ENCODE measurements at regions of chr10 and their contacts with region 1.

Region 1: DNA sequence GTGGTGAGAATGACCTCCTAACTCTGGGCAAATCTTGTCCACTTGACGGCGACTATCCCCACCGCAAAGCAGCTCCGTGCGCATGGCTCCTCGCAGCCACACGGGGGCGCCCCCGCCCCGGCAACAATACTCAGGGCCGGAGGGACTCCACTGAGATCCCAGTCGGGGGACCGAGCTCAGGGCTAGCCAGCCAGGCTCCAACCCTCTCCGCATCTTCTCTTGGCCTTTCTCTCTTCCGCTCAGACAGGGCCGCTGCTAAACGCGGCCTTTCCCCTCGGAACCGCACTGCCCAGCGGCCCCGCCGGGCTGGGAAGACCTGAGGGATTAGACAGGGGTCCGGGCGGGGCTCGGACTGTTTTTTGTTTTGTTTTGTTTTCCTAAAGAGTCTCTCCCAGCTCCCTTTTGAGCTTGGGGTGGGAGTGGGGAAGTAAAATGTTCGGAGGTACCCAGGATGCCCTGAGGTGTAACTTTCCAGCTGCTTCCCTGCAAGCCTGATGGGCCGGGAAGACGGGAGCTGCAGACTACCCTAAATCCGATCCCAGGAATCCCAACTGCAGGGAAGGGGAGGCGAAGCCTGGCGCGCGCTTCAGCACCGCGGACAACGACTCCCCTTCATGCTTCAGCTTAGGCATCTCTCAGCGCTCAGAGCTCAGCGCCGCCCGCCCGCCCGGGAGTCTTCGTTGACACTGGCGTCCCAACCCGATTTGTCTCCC is 2.7 kb downstream of the KCNIP2 start:
- DNase-seq: peak in 1 of 2 experiments; percentile 96
- H3K4me3 ChIP-seq: peak overlapping the region; percentile 70 to 81 (median 76); a peak in 7 of 8 replicates
- H3K27ac ChIP-seq: no peak overlapping the region
- H3K4me1 ChIP-seq: peaks cover 3 to 21% (median 12%) of the 10 kb centered on the region in 4 experiments
- H3K27me3 ChIP-seq: peaks cover 3 to 18% (median 18%) of the 10 kb centered on the region in 4 experiments
- CTCF ChIP-seq: peak; percentile 97 to 99 (median 98)
- EP300 ChIP-seq: no peak
- POLR2A ChIP-seq: no peak
- RAD21 ChIP-seq: peak; percentile 91 to 93

Region 2: GRCh38 chr10:101858723-101859500 is 18.0 kb after region 1 on chr10:
- CTCF ChIA-PET with region 1: interaction called, 70 read pairs
- POLR2A ChIA-PET with region 1: no interaction called
- DNase-seq: no peak
- H3K4me3 ChIP-seq: no peak overlapping the region
- H3K27ac ChIP-seq: no peak overlapping the region
- H3K4me1 ChIP-seq: no peaks in the 10 kb centered on the region
- H3K27me3 ChIP-seq: no peaks in the 10 kb centered on the region
- CTCF ChIP-seq: no peak
- EP300 ChIP-seq: no peak
- POLR2A ChIP-seq: no peak
- RAD21 ChIP-seq: no peak

Region 3: GRCh38 chr10:101903827-101904550 is 63.1 kb after region 1 on chr10:
- CTCF ChIA-PET with region 1: interaction called, 14 read pairs
- POLR2A ChIA-PET with region 1: no interaction called
- DNase-seq: no peak
- H3K4me3 ChIP-seq: no peak overlapping the region
- H3K27ac ChIP-seq: no peak overlapping the region
- H3K4me1 ChIP-seq: peaks cover 6 to 28% (median 18%) of the 10 kb centered on the region in 4 experiments; a peak in 6 of 7 replicates
- H3K27me3 ChIP-seq: no peaks in the 10 kb centered on the region; a peak in 1 of 7 replicates
- CTCF ChIP-seq: no peak
- EP300 ChIP-seq: no peak
- POLR2A ChIP-seq: no peak
- RAD21 ChIP-seq: no peak

Region 4: DNA sequence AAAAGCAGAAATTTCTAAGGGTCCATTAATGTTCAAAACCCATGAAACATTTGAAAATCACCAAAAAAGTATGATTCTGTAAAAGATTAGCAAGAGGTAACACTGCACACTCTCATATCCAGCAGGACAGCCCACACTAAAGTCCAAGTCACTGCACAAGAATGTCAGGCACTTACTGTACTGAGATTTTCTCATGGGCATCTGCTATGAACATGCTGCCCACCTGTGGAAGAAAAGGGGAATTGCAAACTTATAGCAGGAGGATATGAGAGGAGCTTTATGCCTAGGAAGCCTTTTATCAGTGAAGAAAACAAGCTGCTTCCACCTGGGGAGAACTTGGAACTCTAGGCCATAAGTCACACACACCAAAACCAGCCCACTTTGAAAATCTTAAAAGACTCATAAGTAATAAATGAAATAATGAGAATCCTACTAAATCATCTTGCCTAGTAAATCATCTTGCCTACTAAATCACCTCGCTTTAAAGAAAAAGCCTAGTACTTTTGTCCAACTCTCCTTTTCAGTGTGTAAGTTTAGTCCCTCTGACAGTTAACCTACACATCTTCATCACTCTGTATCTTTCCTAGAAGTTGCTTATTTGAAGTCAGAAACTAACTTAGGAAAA is 169.0 kb after region 1 on chr10:
- CTCF ChIA-PET with region 1: interaction called, 154 read pairs
- POLR2A ChIA-PET with region 1: interaction called, 5 read pairs
- DNase-seq: peak in 1 of 2 experiments; percentile 17
- H3K4me3 ChIP-seq: no peak overlapping the region
- H3K27ac ChIP-seq: no peak overlapping the region
- H3K4me1 ChIP-seq: peaks cover 0 to 5% (median 2%) of the 10 kb centered on the region in 4 experiments; a peak in 3 of 7 replicates
- H3K27me3 ChIP-seq: no peaks in the 10 kb centered on the region
- CTCF ChIP-seq: peak in 2 of 3 experiments; percentile 95 to 99; a peak in 3 of 4 replicates
- EP300 ChIP-seq: no peak
- POLR2A ChIP-seq: no peak
- RAD21 ChIP-seq: peak; percentile 99

Region 5: GRCh38 chr10:102055647-102056419 is 214.9 kb after region 1 on chr10 and contains the start of gene ARMH3:
- CTCF ChIA-PET with region 1: interaction called, 11 read pairs
- POLR2A ChIA-PET with region 1: interaction called, 4 read pairs
- DNase-seq: peak; percentile 80 to 90
- H3K4me3 ChIP-seq: peak within 1 kb of the TSS; percentile 80 to 92 (median 82)
- H3K27ac ChIP-seq: peak within 1 kb of the TSS; percentile 53; the same call in 1 of the 2 replicates
- H3K4me1 ChIP-seq: no peaks in the 10 kb centered on the region
- H3K27me3 ChIP-seq: no peaks in the 10 kb centered on the region
- CTCF ChIP-seq: 0 out of 4 replicates have a peak, but pooled peaks of 1 of the 3 experiments have one; percentile 8
- EP300 ChIP-seq: 0 out of 3 replicates have a peak, but pooled peaks of 1 of the 2 experiments have one; percentile 15
- POLR2A ChIP-seq: peak in 1 of 2 experiments; percentile 60; a peak in 2 of 3 replicates
- RAD21 ChIP-seq: no peak
- total RNA-seq, gene ARMH3: 16.1 and 18.3 TPM in 2 replicates

Region 6: GRCh38 chr10:102159051-102159597 is 318.2 kb after region 1 on chr10:
- CTCF ChIA-PET with region 1: no interaction called
- POLR2A ChIA-PET with region 1: no interaction called
- DNase-seq: no peak
- H3K4me3 ChIP-seq: no peak overlapping the region
- H3K27ac ChIP-seq: no peak overlapping the region
- H3K4me1 ChIP-seq: peaks cover 0 to 4% (median 0%) of the 10 kb centered on the region in 4 experiments; a peak in 1 of 7 replicates
- H3K27me3 ChIP-seq: no peaks in the 10 kb centered on the region
- CTCF ChIP-seq: no peak
- EP300 ChIP-seq: no peak
- POLR2A ChIP-seq: no peak
- RAD21 ChIP-seq: no peak

Measured in H1 (cell line).